Activated CD8-positive, alpha-beta T cell treated with anti-CD3 and anti-CD28 coated beads, Interleukin-2, amount 10 ng/mL, durations not matched to agents 7 days and 5 days (primary cell): ENCODE measurements at regions of chr17 and their contacts with region 1.

Region 1: GRCh38 chr17:49315551-49316257 is 46.3 kb downstream of the ZNF652 start:
- DNase-seq: peak; percentile 90
- ATAC-seq: peak; percentile 99
- H3K4me3 Mint-ChIP-seq: peak overlapping the region; percentile 60
- H3K27ac Mint-ChIP-seq: peak overlapping the region; percentile 77
- H3K4me1 Mint-ChIP-seq: peaks cover 37% of the 10 kb centered on the region
- H3K27me3 Mint-ChIP-seq: no peaks in the 10 kb centered on the region

Region 2: GRCh38 chr17:49297141-49297540 is 18.6 kb before region 1 on chr17:
- CTCF ChIA-PET with region 1: interaction called, 11 read pairs
- POLR2A ChIA-PET with region 1: no interaction called
- DNase-seq: no peak
- ATAC-seq: no peak
- H3K4me3 Mint-ChIP-seq: no peak overlapping the region
- H3K27ac Mint-ChIP-seq: no peak overlapping the region
- H3K4me1 Mint-ChIP-seq: peaks cover 3% of the 10 kb centered on the region
- H3K27me3 Mint-ChIP-seq: no peaks in the 10 kb centered on the region

Region 3: GRCh38 chr17:49343273-49343672 is 27.6 kb after region 1 on chr17:
- CTCF ChIA-PET with region 1: interaction called, 27 read pairs
- POLR2A ChIA-PET with region 1: interaction called, 4 read pairs
- DNase-seq: no peak
- ATAC-seq: peak; percentile 50
- H3K4me3 Mint-ChIP-seq: peak overlapping the region; percentile 72
- H3K27ac Mint-ChIP-seq: peak overlapping the region; percentile 71
- H3K4me1 Mint-ChIP-seq: peaks cover 71% of the 10 kb centered on the region
- H3K27me3 Mint-ChIP-seq: no peaks in the 10 kb centered on the region

Region 4: DNA sequence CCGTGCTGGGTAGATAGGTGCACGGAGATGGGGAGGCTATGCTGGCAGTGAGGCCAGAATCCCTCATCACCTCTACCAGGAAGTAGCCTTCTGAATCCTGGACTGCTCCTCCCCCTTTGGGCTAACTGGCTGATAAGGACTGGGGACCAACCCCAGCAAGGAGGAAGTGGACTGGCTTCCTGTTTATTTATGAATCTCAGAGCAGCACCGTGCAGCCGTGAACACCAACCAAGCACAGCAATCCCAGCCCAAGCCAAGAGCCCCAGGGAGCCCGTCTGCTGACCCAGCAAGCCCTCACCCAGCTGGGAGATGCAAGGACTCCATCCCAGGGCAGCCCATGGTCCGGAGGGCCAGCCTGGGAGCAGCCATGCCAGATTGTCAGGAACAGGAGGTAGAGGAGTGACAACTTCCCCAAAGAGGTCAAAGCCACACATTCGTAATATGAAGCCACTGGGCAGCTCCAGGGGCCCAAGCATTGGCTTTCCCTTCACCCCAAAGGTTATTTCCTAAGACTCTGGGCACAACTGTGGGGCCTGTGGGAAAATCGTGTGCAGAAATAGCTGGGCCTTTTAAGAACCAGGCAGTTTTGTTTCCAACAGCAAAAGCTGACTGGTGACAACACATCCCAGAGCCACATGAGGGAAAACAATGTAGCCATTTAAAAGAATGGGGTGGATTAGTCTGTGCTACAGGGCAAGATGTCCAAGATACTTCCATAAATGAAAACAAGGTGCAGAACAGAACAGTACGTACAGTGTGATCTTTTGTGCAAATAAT is 75.0 kb after region 1 on chr17:
- CTCF ChIA-PET with region 1: interaction called, 84 read pairs
- POLR2A ChIA-PET with region 1: interaction called, 3 read pairs
- DNase-seq: no peak
- ATAC-seq: no peak
- H3K4me3 Mint-ChIP-seq: peak overlapping the region; percentile 37
- H3K27ac Mint-ChIP-seq: peak overlapping the region; percentile 94
- H3K4me1 Mint-ChIP-seq: peaks cover 71% of the 10 kb centered on the region
- H3K27me3 Mint-ChIP-seq: no peaks in the 10 kb centered on the region

Region 5: DNA sequence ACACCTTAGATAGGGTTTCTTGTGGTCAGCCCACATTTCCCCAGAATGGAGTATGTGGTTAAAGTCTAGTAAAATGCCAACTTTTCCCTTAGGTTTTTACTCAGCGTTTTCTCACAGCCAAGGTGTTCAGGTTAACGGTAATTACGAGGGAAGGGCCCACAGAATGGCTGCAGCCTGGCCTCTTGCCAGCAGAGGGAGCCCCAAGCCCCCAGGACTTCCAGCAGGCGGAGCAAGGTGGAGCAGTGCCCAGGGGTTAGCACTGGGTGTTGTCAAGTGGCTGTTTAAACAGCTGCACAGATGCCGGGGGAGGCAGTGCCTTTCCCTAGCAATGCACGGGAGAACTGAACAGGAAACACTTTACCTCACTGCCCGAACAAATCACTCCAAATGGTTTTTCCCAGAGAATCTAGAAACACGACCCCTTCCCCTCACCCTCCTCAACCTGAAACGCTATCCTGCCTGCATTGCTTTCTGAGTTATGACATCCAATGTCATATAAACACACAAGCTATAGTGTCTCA is 92.3 kb after region 1 on chr17:
- CTCF ChIA-PET with region 1: interaction called, 15 read pairs
- POLR2A ChIA-PET with region 1: no interaction called
- DNase-seq: peak; percentile 90
- ATAC-seq: peak; percentile 95
- H3K4me3 Mint-ChIP-seq: no peak overlapping the region
- H3K27ac Mint-ChIP-seq: peak overlapping the region; percentile 63
- H3K4me1 Mint-ChIP-seq: peaks cover 57% of the 10 kb centered on the region
- H3K27me3 Mint-ChIP-seq: no peaks in the 10 kb centered on the region

Region 6: DNA sequence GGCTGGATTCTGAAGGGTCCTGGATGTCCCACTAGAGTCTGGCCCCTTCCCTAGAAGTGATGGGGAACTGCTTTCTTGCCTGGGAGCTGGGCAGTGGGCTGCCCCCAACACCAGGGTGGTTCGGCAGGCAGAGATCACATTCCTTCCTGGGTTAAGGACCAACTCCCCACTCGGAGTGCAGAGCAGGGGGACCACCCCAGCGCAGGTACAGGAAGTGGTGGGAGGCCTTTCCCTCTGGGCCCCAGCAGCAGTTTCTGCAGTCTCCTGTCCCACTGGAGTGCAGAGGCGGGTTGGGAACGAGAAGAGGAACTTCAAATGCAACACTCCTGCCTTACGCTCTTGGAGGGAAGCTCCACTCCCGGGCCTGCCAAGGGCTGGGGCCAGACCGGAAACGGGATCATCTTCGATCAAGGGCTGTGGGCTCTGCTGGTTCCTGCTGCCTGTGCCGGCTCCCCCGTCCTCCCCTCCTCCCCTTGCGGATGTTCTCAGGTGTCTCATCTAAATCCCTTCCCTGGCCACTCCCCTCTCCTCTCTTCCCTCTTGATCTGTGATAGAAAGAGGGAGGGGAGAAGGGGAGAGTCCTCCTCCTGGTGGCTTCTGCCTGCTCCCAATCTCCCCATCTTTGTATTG is 170.4 kb after region 1 on chr17:
- CTCF ChIA-PET with region 1: no interaction called
- POLR2A ChIA-PET with region 1: no interaction called
- DNase-seq: no peak
- ATAC-seq: no peak
- H3K4me3 Mint-ChIP-seq: no peak overlapping the region
- H3K27ac Mint-ChIP-seq: no peak overlapping the region
- H3K4me1 Mint-ChIP-seq: peaks cover 6% of the 10 kb centered on the region
- H3K27me3 Mint-ChIP-seq: peaks cover 63% of the 10 kb centered on the region